Activated naive CD4-positive, alpha-beta T cell treated with anti-CD3 and anti-CD28 coated beads for 36 hours (primary cell): ENCODE measurements at regions of chr7 and their contacts with region 1.

Region 1: GRCh38 chr7:131188367-131189339 is 139.0 kb upstream of the MKLN1 start:
- DNase-seq: peak; percentile 70
- H3K4me3 Mint-ChIP-seq: no peak overlapping the region
- H3K27ac Mint-ChIP-seq: peak overlapping the region; percentile 89
- H3K4me1 Mint-ChIP-seq: peaks cover 51% of the 10 kb centered on the region
- H3K27me3 Mint-ChIP-seq: no peaks in the 10 kb centered on the region

Region 2: DNA sequence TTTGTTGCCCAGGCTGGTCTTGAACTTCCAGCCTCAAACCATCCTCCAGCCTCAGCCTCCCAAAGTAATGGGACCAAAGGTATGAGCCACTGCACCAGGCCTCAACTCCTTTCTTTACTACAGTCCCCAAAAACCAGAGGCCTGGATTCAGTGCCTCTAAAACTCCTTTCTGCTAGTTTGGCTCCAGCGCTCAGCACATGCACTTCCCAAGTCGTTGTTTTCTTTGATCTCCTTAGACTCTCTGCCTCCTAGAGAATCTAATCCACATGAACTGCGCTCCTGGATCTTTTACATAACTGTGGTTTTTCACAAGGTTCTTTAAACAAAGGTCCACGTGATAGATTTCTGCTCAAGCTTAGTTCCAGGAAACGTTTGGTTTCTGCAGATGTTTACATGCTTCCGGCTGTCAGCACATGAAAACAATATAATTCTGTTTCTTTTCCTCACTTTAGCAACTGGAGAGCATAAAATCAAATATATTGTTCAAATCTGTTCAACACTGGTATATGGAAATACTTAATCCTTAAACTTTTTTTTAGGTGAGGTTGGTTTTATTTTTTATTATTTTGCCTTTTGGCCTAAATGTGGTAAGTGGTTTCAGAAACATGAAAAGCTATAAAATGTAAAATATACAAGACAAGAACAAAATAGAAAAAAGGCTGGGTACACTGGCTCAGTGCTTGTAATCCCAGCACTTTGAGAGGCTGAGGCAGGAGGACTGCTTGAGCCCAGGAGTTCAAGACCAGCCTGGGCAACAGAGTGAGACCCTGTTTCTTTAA is 131.4 kb before region 1 on chr7:
- CTCF ChIA-PET with region 1: interaction called, 3 read pairs
- intact Hi-C with region 1: loop called (anchors 2 kb)
- DNase-seq: peak; percentile 43
- H3K4me3 Mint-ChIP-seq: peak overlapping the region; percentile 66
- H3K27ac Mint-ChIP-seq: peak overlapping the region; percentile 98
- H3K4me1 Mint-ChIP-seq: peaks cover 65% of the 10 kb centered on the region
- H3K27me3 Mint-ChIP-seq: no peaks in the 10 kb centered on the region

Region 3: DNA sequence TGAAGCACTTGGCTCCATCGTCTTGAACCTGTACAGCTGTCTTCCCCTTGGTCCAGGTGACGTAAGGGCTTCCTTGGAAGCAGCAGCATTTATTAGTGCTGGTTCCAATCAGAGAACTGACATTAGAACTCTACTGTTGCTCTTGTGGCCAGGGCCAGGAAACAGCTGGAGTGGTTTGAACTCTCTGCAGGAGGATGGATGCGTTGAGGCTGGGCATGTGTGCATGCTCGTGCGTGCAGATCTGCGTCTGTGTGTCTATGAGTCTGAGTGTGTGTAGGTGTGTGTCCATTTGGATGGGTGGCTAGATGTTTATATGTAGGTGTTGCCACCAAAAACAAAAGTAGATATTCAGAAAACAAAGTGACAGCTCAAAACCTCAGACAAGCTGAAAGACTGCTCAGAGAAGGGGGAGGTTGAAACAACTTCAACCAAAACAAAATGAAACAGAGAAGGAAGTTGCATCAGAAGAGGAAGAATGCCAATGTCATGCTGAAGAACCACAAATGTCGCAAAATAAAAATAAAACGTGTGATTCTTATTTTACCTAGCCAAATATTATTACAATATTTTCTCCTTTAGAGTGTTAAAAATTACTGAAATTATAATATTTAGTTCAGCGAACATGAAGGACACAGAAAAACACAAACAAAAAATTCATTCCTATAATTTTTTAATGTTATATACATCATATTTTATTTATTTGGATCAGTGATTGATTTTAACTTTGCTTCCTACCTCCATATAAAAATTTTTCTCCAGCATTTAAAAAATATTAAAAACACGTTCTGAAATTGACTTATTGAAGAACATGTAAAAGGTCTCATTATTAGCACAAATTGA is 42.9 kb after region 1 on chr7:
- CTCF ChIA-PET with region 1: no interaction called
- intact Hi-C with region 1: loop called (anchors 1 kb)
- DNase-seq: peak; percentile 80
- H3K4me3 Mint-ChIP-seq: peak overlapping the region; percentile 57
- H3K27ac Mint-ChIP-seq: peak overlapping the region; percentile 86
- H3K4me1 Mint-ChIP-seq: peaks cover 45% of the 10 kb centered on the region
- H3K27me3 Mint-ChIP-seq: no peaks in the 10 kb centered on the region

Region 4: GRCh38 chr7:131302876-131303707 is 114.4 kb after region 1 on chr7:
- CTCF ChIA-PET with region 1: no interaction called
- intact Hi-C with region 1: loop called (anchors 2 kb)
- DNase-seq: peak; percentile 53
- H3K4me3 Mint-ChIP-seq: no peak overlapping the region
- H3K27ac Mint-ChIP-seq: no peak overlapping the region
- H3K4me1 Mint-ChIP-seq: peaks cover 5% of the 10 kb centered on the region
- H3K27me3 Mint-ChIP-seq: no peaks in the 10 kb centered on the region

Region 5: GRCh38 chr7:131327626-131328376 is 139.1 kb after region 1 on chr7 and contains the start of gene MKLN1:
- CTCF ChIA-PET with region 1: no interaction called
- intact Hi-C with region 1: loop called (anchors 2 kb)
- DNase-seq: peak; percentile 90
- H3K4me3 Mint-ChIP-seq: peak within 1 kb of the TSS; percentile 98
- H3K27ac Mint-ChIP-seq: peak within 1 kb of the TSS; percentile 96
- H3K4me1 Mint-ChIP-seq: peaks cover 54% of the 10 kb centered on the region
- H3K27me3 Mint-ChIP-seq: no peaks in the 10 kb centered on the region
- total RNA-seq, gene MKLN1: 29.8 to 34.9 TPM

Region 6: GRCh38 chr7:131370523-131370968 is 181.9 kb after region 1 on chr7:
- CTCF ChIA-PET with region 1: no interaction called
- intact Hi-C with region 1: loop called (anchors 2 kb)
- DNase-seq: peak; percentile 15
- H3K4me3 Mint-ChIP-seq: no peak overlapping the region
- H3K27ac Mint-ChIP-seq: no peak overlapping the region
- H3K4me1 Mint-ChIP-seq: peaks cover 66% of the 10 kb centered on the region
- H3K27me3 Mint-ChIP-seq: no peaks in the 10 kb centered on the region

Region 7: DNA sequence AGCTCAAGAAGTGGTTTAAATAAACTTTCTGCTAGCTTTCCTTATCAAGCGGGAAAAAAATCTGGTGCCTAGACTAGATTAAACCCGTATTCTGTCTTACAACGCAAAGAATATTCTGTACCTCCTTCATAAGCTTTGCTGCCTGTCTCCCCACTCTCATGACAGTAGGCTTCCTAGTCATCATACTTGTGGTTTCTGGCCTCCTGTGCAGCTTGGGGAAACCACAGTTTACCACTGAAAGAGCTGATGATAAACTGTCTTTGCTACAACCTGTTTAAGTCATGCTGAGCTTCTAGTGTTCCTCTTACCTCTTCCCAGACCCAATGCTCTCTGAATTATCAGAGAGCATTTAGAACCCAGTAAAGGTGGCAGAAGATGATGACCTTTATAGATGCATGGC is 312.8 kb after region 1 on chr7:
- CTCF ChIA-PET with region 1: no interaction called
- intact Hi-C with region 1: loop called (anchors 1 kb)
- DNase-seq: peak; percentile 83
- H3K4me3 Mint-ChIP-seq: no peak overlapping the region
- H3K27ac Mint-ChIP-seq: peak overlapping the region; percentile 53
- H3K4me1 Mint-ChIP-seq: peaks cover 35% of the 10 kb centered on the region
- H3K27me3 Mint-ChIP-seq: no peaks in the 10 kb centered on the region

Region 8: GRCh38 chr7:131688738-131689661 is 500.3 kb after region 1 on chr7:
- CTCF ChIA-PET with region 1: no interaction called
- intact Hi-C with region 1: no loop called
- DNase-seq: peak; percentile 74
- H3K4me3 Mint-ChIP-seq: no peak overlapping the region
- H3K27ac Mint-ChIP-seq: no peak overlapping the region
- H3K4me1 Mint-ChIP-seq: no peaks in the 10 kb centered on the region
- H3K27me3 Mint-ChIP-seq: peaks cover 40% of the 10 kb centered on the region